ENCODE measurements at regions of chr4 and their contacts with region 1.

Region 1: DNA sequence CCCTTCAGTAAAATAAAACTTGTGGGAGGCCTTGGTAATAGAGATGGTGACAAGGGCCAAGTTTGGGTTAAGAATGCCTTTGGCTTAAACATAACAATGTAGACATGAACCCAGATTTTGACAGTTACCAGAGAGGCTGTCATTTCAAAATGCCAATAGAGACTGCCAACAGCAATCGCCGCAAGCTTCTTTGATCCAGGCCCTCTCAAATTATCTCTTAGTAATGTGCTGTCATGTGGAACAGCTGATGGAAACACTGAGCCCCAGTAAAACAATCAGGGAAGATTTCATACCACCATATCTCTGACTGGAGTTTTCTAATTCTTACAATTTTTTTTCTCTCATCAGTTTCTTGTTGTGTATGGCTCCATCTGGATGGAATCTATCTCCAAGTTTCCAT is 80.5 kb downstream of the ZNF330 start:
- DNase-seq: no peak

Region 2: GRCh38 chr4:141109983-141110382 is 191.2 kb before region 1 on chr4:
- CTCF ChIA-PET with region 1: no interaction called
- POLR2A ChIA-PET with region 1: no interaction called
- DNase-seq: no peak

Region 3: GRCh38 chr4:141283563-141283962 is 17.7 kb before region 1 on chr4:
- CTCF ChIA-PET with region 1: no interaction called
- POLR2A ChIA-PET with region 1: no interaction called
- DNase-seq: no peak

Region 4: DNA sequence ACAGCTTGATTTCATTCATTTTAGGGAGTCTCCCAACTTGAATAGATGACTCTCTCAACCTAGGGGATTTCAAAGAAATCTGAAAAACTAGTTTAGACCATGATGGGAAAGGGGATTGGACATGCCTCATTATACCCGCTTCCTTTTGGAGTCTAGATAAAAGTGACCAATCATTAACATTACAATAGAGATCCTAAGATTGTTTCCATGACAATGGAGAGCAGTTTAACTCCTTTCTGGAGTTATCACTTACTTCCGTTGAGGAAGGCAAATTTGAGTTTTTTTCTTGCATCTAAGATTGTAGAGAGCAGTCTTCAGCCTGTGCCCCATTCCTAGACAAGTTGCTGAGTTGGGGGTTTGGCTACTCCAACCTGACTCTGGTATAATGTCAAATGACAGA is 323.8 kb after region 1 on chr4:
- CTCF ChIA-PET with region 1: interaction called, 11 read pairs
- POLR2A ChIA-PET with region 1: no interaction called
- DNase-seq: no peak

Measured in HEK293T (cell line).